Prostate gland (tissue), 2 donors: ENCODE measurements at regions of chr19 and their contacts with region 1.

Region 1: DNA sequence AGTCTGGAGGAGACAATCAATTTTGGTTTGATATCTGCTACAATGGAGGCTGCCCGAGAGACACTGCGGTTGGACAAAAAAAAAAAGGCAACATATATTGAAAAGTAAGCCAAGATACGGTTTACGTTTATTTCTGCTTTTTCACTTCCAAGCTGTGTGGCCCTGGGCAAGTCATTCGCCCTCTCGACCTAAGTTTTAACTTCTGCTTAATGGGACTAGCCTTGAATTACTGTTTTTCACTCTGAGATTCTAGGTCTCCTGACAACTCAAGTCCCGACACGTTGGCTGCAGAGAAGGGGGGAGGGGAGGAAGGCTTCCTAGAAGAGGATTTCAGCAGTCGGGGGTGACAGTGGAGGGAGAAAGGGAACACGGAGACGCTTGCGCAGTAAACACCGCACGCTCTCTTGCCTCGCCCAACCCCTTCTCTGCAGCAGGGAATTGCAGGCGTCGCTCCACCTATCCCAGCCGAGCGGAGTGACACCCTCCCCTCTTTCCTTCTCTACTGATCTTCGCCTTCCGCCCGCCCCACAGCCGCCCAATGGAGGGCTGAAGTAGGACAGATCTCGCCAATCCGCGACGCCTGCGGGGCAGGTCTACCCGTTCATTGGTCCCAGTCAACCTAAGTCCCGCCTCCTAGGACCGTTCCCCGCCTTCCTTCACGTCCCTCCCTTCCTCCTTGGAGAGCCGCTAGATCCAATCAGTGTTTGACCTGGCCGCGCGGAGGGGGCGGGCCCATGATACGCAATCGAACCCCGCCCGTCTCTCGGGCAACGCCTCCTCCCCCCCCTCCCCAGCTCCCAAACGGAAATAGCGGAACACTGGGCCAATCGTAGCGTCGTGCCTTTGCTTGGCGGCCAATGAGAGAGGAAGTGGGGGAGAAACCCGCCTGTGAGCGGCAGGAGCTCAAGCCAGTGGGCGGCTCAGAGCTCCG is 529 bp upstream of the AP2A1 start:
- DNase-seq: peak; percentile 99
- H3K4me3 ChIP-seq: peak overlapping the region; percentile 82 to 94
- H3K27ac ChIP-seq: peak overlapping the region; percentile 82 to 86
- H3K4me1 ChIP-seq: peaks cover 10% of the 10 kb centered on the region
- H3K27me3 ChIP-seq: no peaks in the 10 kb centered on the region
- CTCF ChIP-seq: peak in 2 of 4 experiments; percentile 36 to 49
- POLR2A ChIP-seq: peak; percentile 85

Region 2: GRCh38 chr19:49690656-49691242 is 75.5 kb before region 1 on chr19 and contains the start of gene CPT1C:
- intact Hi-C with region 1: loop called (anchors 5 kb)
- DNase-seq: peak; percentile 81
- H3K4me3 ChIP-seq: peak within 1 kb of the TSS; percentile 28 to 44
- H3K27ac ChIP-seq: peak within 1 kb of the TSS; percentile 58 to 68
- H3K4me1 ChIP-seq: no peaks in the 10 kb centered on the region
- H3K27me3 ChIP-seq: no peaks in the 10 kb centered on the region
- CTCF ChIP-seq: no peak
- POLR2A ChIP-seq: peak; percentile 58
- total RNA-seq, gene CPT1C: 0.96 to 5.5 TPM

Region 3: GRCh38 chr19:49808711-49809159 is 42.5 kb after region 1 on chr19:
- intact Hi-C with region 1: loop called (anchors 2 kb)
- DNase-seq: peak; percentile 95
- H3K4me3 ChIP-seq: peak overlapping the region; percentile 43 to 48
- H3K27ac ChIP-seq: peak overlapping the region; percentile 80 to 81
- H3K4me1 ChIP-seq: peaks cover 6% of the 10 kb centered on the region
- H3K27me3 ChIP-seq: no peaks in the 10 kb centered on the region
- CTCF ChIP-seq: peak in 1 of 4 experiments; percentile 4
- POLR2A ChIP-seq: peak; percentile 76

Region 4: GRCh38 chr19:49818649-49819370 is 52.5 kb after region 1 on chr19:
- intact Hi-C with region 1: no loop called
- DNase-seq: no peak
- H3K4me3 ChIP-seq: peak overlapping the region; percentile 67 to 79
- H3K27ac ChIP-seq: peak overlapping the region; percentile 91 to 93
- H3K4me1 ChIP-seq: peaks cover 3% of the 10 kb centered on the region
- H3K27me3 ChIP-seq: no peaks in the 10 kb centered on the region
- CTCF ChIP-seq: no peak
- POLR2A ChIP-seq: no peak